ENCODE measurements at regions of chr14 and their contacts with region 1.

Region 1: GRCh38 chr14:103488960-103489359 is 33.7 kb downstream of the CKB start:
- DNase-seq: no peak
- ATAC-seq: no peak
- H3K4me3 ChIP-seq: no peak overlapping the region
- H3K4me3 Mint-ChIP-seq: no peak overlapping the region
- H3K27ac ChIP-seq: no peak overlapping the region
- H3K27ac Mint-ChIP-seq: no peak overlapping the region
- H3K4me1 ChIP-seq: no peaks in the 10 kb centered on the region
- H3K4me1 Mint-ChIP-seq: no peaks in the 10 kb centered on the region
- H3K27me3 ChIP-seq: no peaks in the 10 kb centered on the region
- H3K27me3 Mint-ChIP-seq: no peaks in the 10 kb centered on the region

Region 2: DNA sequence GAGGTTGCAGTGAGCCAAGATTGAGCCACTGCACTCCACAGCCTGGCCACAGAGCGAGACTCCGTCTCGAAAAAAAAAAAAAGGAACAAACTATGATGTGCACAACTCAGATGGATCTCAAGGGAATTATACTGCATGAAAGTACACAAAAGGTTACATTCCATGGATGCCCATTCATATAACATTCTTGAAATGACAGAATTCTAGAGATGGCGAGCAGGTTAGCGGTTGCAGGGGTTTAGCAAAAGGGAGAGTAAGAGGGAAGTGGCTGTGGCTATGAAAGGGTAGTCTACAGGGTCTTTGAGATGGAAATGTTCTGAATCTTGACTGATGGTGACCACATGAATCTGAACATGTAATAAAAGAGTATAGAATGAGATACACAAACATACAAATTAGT is 16.0 kb before region 1 on chr14:
- CTCF ChIA-PET with region 1: no interaction called
- POLR2A ChIA-PET with region 1: no interaction called
- DNase-seq: no peak
- ATAC-seq: no peak
- H3K4me3 ChIP-seq: no peak overlapping the region
- H3K4me3 Mint-ChIP-seq: no peak overlapping the region
- H3K27ac ChIP-seq: no peak overlapping the region
- H3K27ac Mint-ChIP-seq: no peak overlapping the region
- H3K4me1 ChIP-seq: no peaks in the 10 kb centered on the region
- H3K4me1 Mint-ChIP-seq: no peaks in the 10 kb centered on the region
- H3K27me3 ChIP-seq: no peaks in the 10 kb centered on the region
- H3K27me3 Mint-ChIP-seq: no peaks in the 10 kb centered on the region

Region 3: GRCh38 chr14:103528587-103529382 is 39.8 kb after region 1 on chr14 and contains the start of gene TRMT61A:
- CTCF ChIA-PET with region 1: no interaction called
- POLR2A ChIA-PET with region 1: no interaction called
- DNase-seq: peak; percentile 53 to 89 (median 69)
- ATAC-seq: peak; percentile 82 to 92 (median 84)
- H3K4me3 ChIP-seq: peak within 1 kb of the TSS; percentile 80 to 93
- H3K4me3 Mint-ChIP-seq: peak within 1 kb of the TSS; percentile 89 to 93 (median 90)
- H3K27ac ChIP-seq: peak within 1 kb of the TSS; percentile 79
- H3K27ac Mint-ChIP-seq: peak within 1 kb of the TSS; percentile 90 to 92
- H3K4me1 ChIP-seq: peaks cover 13 to 44% of the 10 kb centered on the region in 2 experiments
- H3K4me1 Mint-ChIP-seq: peaks cover 35 to 51% (median 48%) of the 10 kb centered on the region in 3 donors
- H3K27me3 ChIP-seq: peaks cover under 1 to 8% of the 10 kb centered on the region in 2 experiments
- H3K27me3 Mint-ChIP-seq: peaks cover under 1 to 2% of the 10 kb centered on the region in 2 donors
- total RNA-seq, gene TRMT61A: 10.0 to 20.3 (median 17.6) TPM

Region 4: DNA sequence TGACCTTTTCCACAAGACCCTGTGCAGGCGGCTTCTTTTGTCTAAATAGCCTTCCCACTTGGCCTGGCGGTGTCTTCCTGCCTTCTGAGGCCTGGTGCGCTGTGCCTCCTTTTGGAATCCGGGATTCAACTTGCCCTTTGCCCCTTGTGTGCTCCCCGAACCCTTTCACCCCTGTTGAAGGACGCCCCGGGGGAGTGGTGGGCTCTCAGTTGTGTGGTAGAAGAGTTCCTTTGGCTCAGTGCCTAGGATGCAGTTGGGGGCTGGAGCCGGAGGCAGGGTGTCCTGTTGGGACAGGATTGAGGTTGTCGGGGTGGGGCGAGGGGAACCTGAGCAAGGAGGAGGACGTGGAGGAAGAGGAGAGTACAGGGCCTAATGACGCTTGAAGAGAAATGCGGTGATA is 174.5 kb after region 1 on chr14:
- CTCF ChIA-PET with region 1: no interaction called
- POLR2A ChIA-PET with region 1: interaction called in 1 of 2 experiments, 13 read pairs
- DNase-seq: no peak
- ATAC-seq: no peak
- H3K4me3 ChIP-seq: no peak overlapping the region
- H3K4me3 Mint-ChIP-seq: no peak overlapping the region
- H3K27ac ChIP-seq: no peak overlapping the region
- H3K27ac Mint-ChIP-seq: no peak overlapping the region
- H3K4me1 ChIP-seq: no peaks in the 10 kb centered on the region
- H3K4me1 Mint-ChIP-seq: peaks cover 0 to 2% (median 0%) of the 10 kb centered on the region in 3 donors
- H3K27me3 ChIP-seq: no peaks in the 10 kb centered on the region
- H3K27me3 Mint-ChIP-seq: no peaks in the 10 kb centered on the region